Activated T-helper 2 cell treated with anti-CD3 and anti-CD28 coated beads, Interferon-gamma antibody, Interleukin-2, Interleukin-4, amounts not matched to agents 10 μg/mL and 5 μg/mL and 100 μg/mL, durations not matched to agents 14 hours and 24 hours and 36 hours (primary cell): ENCODE measurements at regions of chr1 and their contacts with region 1.

Region 1: GRCh38 chr1:221435504-221435904 is 306.4 kb downstream of the DUSP10 start:
- DNase-seq: no peak
- H3K4me3 Mint-ChIP-seq: no peak overlapping the region
- H3K27ac Mint-ChIP-seq: no peak overlapping the region
- H3K4me1 Mint-ChIP-seq: peaks cover 31% of the 10 kb centered on the region
- H3K27me3 Mint-ChIP-seq: peaks cover 9% of the 10 kb centered on the region

Region 2: GRCh38 chr1:220879076-220879508 is 556.4 kb before region 1 on chr1 and contains the start of gene HLX:
- intact Hi-C with region 1: loop called (anchors 1 kb)
- DNase-seq: peak; percentile 15
- H3K4me3 Mint-ChIP-seq: peak within 1 kb of the TSS; percentile 85
- H3K27ac Mint-ChIP-seq: peak within 1 kb of the TSS; percentile 78
- H3K4me1 Mint-ChIP-seq: peaks cover 31% of the 10 kb centered on the region
- H3K27me3 Mint-ChIP-seq: peaks cover 70% of the 10 kb centered on the region
- total RNA-seq, gene HLX: 8.2 and 10.4 TPM in 2 replicates

Region 3: DNA sequence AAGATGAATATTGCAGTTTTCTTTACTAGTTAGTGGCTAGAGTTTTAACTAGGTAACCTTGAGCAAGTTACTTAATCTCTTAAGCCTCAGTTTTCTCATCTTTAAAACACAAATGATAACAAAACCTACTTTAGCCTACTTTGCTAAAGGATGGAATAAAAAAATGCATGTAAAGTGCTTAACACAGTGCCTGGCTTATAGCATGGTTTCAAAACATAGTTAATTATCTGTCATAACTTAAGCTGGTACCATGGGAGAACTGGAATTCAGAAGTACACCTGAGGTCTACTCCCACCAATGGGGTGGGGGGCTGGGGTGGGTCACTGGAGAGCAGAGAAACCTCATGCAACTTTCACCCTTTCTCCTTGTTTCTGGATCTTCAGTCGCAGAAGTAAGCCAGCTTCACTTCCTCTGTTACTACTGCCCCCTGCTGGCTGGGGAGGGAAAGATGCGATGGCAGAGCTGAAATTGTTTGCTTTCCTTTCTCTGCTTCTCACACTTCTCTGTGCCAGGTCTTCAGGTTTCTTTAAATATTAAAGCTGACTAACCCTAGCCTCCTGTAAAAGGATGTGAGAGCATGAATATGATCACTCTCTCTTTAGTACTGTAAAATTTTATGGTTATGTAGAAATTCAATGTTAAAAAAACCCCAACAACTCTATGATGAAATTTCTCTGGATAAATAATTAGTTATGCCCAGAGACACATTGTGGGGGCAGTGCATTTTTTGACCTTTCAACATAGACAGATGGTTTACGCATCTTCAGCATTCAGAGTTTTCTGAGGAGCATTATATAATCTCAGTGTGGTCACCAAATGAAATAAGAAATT is 232.1 kb before region 1 on chr1:
- intact Hi-C with region 1: loop called (anchors 5 kb)
- DNase-seq: peak; percentile 46
- H3K4me3 Mint-ChIP-seq: no peak overlapping the region
- H3K27ac Mint-ChIP-seq: no peak overlapping the region
- H3K4me1 Mint-ChIP-seq: peaks cover 16% of the 10 kb centered on the region
- H3K27me3 Mint-ChIP-seq: no peaks in the 10 kb centered on the region

Region 4: GRCh38 chr1:221217029-221217428 is 218.5 kb before region 1 on chr1:
- intact Hi-C with region 1: no loop called
- DNase-seq: no peak
- H3K4me3 Mint-ChIP-seq: no peak overlapping the region
- H3K27ac Mint-ChIP-seq: no peak overlapping the region
- H3K4me1 Mint-ChIP-seq: no peaks in the 10 kb centered on the region
- H3K27me3 Mint-ChIP-seq: no peaks in the 10 kb centered on the region

Region 5: GRCh38 chr1:221315330-221315729 is 120.2 kb before region 1 on chr1:
- intact Hi-C with region 1: no loop called
- DNase-seq: no peak
- H3K4me3 Mint-ChIP-seq: no peak overlapping the region
- H3K27ac Mint-ChIP-seq: no peak overlapping the region
- H3K4me1 Mint-ChIP-seq: no peaks in the 10 kb centered on the region
- H3K27me3 Mint-ChIP-seq: peaks cover 3% of the 10 kb centered on the region

Region 6: DNA sequence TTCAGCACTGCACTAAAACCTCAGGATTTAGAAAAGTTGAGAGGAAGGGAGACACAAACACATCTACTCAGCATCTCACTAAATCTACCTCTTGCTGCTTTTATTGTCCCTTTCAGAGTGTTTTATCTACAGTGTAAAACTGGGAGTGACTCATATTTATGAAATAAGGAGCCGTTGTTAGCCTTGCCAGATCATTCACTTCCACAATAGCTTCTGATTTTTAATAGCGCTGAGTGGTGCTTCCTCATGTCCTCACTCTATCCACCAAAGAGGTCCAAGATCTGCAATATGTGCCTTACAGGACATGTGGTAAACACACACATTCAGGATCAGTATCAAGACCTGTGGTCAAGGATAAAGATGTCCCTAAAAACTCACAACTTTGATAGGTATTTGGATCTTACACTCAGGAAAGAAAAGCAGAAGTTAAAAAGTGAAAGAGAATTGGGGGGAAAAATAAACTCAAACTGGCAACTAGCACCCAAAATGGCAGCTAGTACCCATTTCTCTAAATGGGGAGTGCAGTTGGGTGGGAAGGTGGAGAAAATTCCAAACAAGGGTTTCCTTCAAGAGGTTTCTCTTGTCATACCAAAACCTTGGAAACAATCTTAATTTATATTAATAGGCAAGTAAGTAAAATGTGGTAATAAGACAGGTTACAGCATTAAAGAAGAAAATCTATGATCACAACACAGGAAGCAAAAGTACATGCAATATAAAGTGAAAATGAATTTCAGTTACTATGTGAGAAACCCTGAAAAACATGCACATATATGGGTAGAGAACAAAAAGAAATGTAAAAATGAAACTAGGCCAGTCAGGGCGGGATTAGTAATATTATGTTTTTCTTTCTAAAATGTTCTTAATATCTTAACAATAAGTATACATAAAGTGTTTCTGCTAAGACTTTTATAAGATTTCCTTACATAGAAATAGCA is 290.5 kb after region 1 on chr1:
- intact Hi-C with region 1: loop called (anchors 5 kb)
- DNase-seq: no peak
- H3K4me3 Mint-ChIP-seq: peak overlapping the region; percentile 69
- H3K27ac Mint-ChIP-seq: peak overlapping the region; percentile 95
- H3K4me1 Mint-ChIP-seq: peaks cover 84% of the 10 kb centered on the region
- H3K27me3 Mint-ChIP-seq: no peaks in the 10 kb centered on the region

Region 7: GRCh38 chr1:221994274-221994698 is 558.8 kb after region 1 on chr1:
- intact Hi-C with region 1: loop called (anchors 2 kb)
- DNase-seq: peak; percentile 8
- H3K4me3 Mint-ChIP-seq: no peak overlapping the region
- H3K27ac Mint-ChIP-seq: peak overlapping the region; percentile 96
- H3K4me1 Mint-ChIP-seq: peaks cover 45% of the 10 kb centered on the region
- H3K27me3 Mint-ChIP-seq: no peaks in the 10 kb centered on the region